ENCODE measurements at regions of chr3 and their contacts with region 1.

Region 1: GRCh38 chr3:28328188-28329151 is 20.1 kb upstream of the ZCWPW2 start:
- DNase-seq: no peak
- H3K4me3 Mint-ChIP-seq: no peak overlapping the region
- H3K27ac Mint-ChIP-seq: no peak overlapping the region
- H3K4me1 Mint-ChIP-seq: peaks cover 34% of the 10 kb centered on the region
- H3K27me3 Mint-ChIP-seq: no peaks in the 10 kb centered on the region

Region 2: GRCh38 chr3:27312044-27312668 is 1016.3 kb before region 1 on chr3:
- intact Hi-C with region 1: loop called (anchors 5 kb)
- DNase-seq: no peak
- H3K4me3 Mint-ChIP-seq: no peak overlapping the region
- H3K27ac Mint-ChIP-seq: no peak overlapping the region
- H3K4me1 Mint-ChIP-seq: no peaks in the 10 kb centered on the region
- H3K27me3 Mint-ChIP-seq: peaks cover 15% of the 10 kb centered on the region

Region 3: DNA sequence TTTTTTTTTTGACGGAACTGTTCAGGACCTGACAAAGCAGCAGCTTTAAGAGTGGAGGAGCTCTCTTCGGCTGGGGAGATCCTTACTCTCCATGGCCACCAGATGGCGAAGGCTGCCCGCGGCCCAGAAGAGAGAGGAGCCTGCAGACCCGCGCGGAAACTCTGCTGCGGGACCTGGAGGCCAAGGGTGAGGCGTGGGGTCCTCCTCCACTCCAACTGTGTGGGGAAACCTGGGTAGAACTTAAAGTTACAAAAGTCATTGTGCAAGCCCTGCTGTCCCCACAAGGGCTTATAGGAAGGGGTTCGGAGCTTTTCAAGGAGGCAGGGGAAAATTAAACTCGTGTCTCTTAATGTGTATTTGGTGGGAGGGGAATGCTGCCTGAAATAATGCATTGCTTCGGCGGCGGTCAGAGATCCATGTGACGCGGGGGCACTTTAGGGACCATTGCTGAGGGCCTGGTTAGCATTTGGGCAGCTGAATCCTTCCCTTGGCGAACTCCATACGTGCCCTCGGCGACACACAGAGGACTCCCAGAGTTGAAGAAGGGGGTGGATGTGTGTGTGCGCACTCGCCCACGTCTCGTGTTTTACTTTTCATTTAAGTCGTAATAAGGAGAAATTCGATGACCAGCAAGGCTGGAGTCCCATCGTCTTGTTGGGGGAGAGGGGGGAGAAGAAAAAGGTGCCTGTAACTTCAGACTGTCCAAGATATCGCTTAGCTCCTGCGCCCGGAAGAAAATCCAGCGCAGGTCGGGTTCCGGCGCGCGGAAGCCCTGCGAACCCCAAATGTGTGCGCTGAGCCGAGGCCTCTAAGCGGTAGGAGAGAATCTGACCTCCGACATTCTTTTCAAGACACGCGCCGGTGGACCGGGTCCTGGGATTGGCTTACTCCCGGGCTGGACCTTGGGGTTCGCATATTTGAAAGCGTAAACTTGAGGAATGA is 616.1 kb before region 1 on chr3:
- intact Hi-C with region 1: loop called (anchors 1 kb)
- DNase-seq: peak; percentile 76
- H3K4me3 Mint-ChIP-seq: peak overlapping the region; percentile 93
- H3K27ac Mint-ChIP-seq: peak overlapping the region; percentile 85
- H3K4me1 Mint-ChIP-seq: peaks cover 38% of the 10 kb centered on the region
- H3K27me3 Mint-ChIP-seq: peaks cover 52% of the 10 kb centered on the region

Region 4: DNA sequence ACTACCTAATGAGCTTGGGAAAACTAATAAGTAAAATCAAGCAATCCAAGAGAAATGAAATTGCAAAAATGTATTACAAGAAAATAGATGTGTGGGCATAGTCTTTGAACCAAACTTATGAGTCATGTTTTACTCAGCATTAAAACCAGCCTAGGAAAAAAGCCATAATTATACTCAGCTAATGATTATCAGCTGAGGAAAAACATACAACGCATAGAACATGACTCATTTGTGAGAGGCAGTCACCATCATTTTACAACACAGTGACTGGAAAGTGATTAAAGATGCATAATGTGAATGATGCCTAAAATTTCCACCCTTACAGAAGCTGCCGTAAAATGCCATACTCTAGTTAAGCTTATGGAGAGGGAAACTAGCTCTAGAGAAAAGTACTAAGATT is 368.3 kb before region 1 on chr3:
- intact Hi-C with region 1: loop called (anchors 1 kb)
- DNase-seq: no peak
- H3K4me3 Mint-ChIP-seq: no peak overlapping the region
- H3K27ac Mint-ChIP-seq: no peak overlapping the region
- H3K4me1 Mint-ChIP-seq: peaks cover 41% of the 10 kb centered on the region
- H3K27me3 Mint-ChIP-seq: no peaks in the 10 kb centered on the region

Region 5: DNA sequence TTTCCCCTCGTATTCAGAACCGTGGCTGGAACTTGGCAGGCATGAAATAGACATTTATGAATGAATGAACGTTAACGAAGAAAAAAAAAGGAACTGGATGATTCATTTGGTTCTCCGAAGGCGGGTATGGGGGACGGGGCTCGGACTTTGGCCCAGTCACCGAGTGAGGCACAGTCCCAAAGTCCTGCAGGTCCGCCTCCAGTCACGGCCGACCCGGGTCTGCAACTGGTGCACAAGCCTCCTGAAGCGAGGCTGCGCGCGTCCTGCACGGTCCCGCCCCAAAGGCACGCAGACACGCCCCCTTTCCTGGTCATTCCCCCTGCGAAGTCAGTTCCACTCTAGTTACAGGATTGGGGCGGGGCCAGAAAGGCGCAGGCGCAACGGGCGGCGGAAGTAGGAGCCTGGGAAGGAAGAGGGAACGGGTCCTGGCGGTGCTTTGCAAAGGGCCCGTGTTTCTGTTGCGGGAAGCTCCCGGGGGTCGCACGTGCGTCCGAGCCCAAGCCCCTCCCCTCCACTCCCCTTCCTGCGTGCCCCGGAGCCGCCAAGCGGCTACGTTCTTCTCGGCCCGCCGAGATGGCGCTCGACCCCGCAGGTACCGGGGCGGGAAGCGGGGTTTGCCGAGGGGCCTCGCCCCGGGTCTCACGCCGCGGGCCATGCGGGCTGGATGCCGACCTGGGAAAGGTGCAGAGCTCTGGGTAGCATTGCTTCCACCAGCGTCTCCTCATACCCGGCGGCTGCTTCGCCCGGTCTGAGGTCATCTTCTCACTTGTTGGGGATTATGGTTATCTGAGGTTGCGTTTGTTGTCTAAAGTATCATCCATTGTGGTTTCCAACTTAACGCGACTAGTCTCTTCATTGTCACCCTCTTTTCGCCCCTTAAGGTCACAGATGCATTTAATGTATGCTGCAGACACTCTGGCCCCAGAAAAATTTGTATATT is 87.0 kb before region 1 on chr3 and contains the start of gene CMC1:
- intact Hi-C with region 1: loop called (anchors 2 kb)
- DNase-seq: peak; percentile 86
- H3K4me3 Mint-ChIP-seq: peak within 1 kb of the TSS; percentile 89
- H3K27ac Mint-ChIP-seq: peak within 1 kb of the TSS; percentile 93
- H3K4me1 Mint-ChIP-seq: peaks cover 38% of the 10 kb centered on the region
- H3K27me3 Mint-ChIP-seq: no peaks in the 10 kb centered on the region
- total RNA-seq, gene CMC1: 20.6 and 23.5 TPM in 2 replicates

Region 6: GRCh38 chr3:28348629-28349483 is 20.4 kb after region 1 on chr3 and contains the starts of genes AZI2 and ZCWPW2:
- intact Hi-C with region 1: loop called (anchors 1 kb)
- DNase-seq: peak; percentile 89
- H3K4me3 Mint-ChIP-seq: peak within 1 kb of the TSS; percentile 94
- H3K27ac Mint-ChIP-seq: peak within 1 kb of the TSS; percentile 98
- H3K4me1 Mint-ChIP-seq: peaks cover 48% of the 10 kb centered on the region
- H3K27me3 Mint-ChIP-seq: no peaks in the 10 kb centered on the region
- total RNA-seq, gene AZI2: 35.6 and 37.5 TPM in 2 replicates
- total RNA-seq, gene ZCWPW2: 0.14 and 0.16 TPM in 2 replicates

Region 7: GRCh38 chr3:28376424-28376823 is 48.0 kb after region 1 on chr3:
- intact Hi-C with region 1: no loop called
- DNase-seq: no peak
- H3K4me3 Mint-ChIP-seq: no peak overlapping the region
- H3K27ac Mint-ChIP-seq: no peak overlapping the region
- H3K4me1 Mint-ChIP-seq: no peaks in the 10 kb centered on the region
- H3K27me3 Mint-ChIP-seq: no peaks in the 10 kb centered on the region

Region 8: GRCh38 chr3:28637742-28638141 is 309.3 kb after region 1 on chr3:
- intact Hi-C with region 1: no loop called
- DNase-seq: no peak
- H3K4me3 Mint-ChIP-seq: no peak overlapping the region
- H3K27ac Mint-ChIP-seq: no peak overlapping the region
- H3K4me1 Mint-ChIP-seq: no peaks in the 10 kb centered on the region
- H3K27me3 Mint-ChIP-seq: no peaks in the 10 kb centered on the region